ENCODE measurements at regions of chr4 and their contacts with region 1.

Region 1: GRCh38 chr4:52983563-52984303 is 121.6 kb downstream of the RASL11B start:
- DNase-seq: peak; percentile 21
- H3K4me3 ChIP-seq: no peak overlapping the region
- H3K27ac ChIP-seq: no peak overlapping the region
- H3K27me3 ChIP-seq: no peaks in the 10 kb centered on the region
- CTCF ChIP-seq: peak; percentile 69

Region 2: GRCh38 chr4:52554612-52555355 is 428.9 kb before region 1 on chr4:
- CTCF ChIA-PET with region 1: interaction called, 26 read pairs
- POLR2A ChIA-PET with region 1: no interaction called
- DNase-seq: no peak
- H3K4me3 ChIP-seq: no peak overlapping the region
- H3K27ac ChIP-seq: no peak overlapping the region
- H3K27me3 ChIP-seq: no peaks in the 10 kb centered on the region
- CTCF ChIP-seq: no peak

Region 3: GRCh38 chr4:52659001-52659721 is 324.6 kb before region 1 on chr4 and contains the start of gene USP46:
- CTCF ChIA-PET with region 1: interaction called, 11 read pairs
- POLR2A ChIA-PET with region 1: no interaction called
- DNase-seq: peak; percentile 24
- H3K4me3 ChIP-seq: peak within 1 kb of the TSS; percentile 77
- H3K27ac ChIP-seq: peak within 1 kb of the TSS; percentile 80
- H3K27me3 ChIP-seq: no peaks in the 10 kb centered on the region
- CTCF ChIP-seq: no peak
- polyA plus RNA-seq, gene USP46: 66.6 and 69.1 TPM in 2 replicates

Region 4: DNA sequence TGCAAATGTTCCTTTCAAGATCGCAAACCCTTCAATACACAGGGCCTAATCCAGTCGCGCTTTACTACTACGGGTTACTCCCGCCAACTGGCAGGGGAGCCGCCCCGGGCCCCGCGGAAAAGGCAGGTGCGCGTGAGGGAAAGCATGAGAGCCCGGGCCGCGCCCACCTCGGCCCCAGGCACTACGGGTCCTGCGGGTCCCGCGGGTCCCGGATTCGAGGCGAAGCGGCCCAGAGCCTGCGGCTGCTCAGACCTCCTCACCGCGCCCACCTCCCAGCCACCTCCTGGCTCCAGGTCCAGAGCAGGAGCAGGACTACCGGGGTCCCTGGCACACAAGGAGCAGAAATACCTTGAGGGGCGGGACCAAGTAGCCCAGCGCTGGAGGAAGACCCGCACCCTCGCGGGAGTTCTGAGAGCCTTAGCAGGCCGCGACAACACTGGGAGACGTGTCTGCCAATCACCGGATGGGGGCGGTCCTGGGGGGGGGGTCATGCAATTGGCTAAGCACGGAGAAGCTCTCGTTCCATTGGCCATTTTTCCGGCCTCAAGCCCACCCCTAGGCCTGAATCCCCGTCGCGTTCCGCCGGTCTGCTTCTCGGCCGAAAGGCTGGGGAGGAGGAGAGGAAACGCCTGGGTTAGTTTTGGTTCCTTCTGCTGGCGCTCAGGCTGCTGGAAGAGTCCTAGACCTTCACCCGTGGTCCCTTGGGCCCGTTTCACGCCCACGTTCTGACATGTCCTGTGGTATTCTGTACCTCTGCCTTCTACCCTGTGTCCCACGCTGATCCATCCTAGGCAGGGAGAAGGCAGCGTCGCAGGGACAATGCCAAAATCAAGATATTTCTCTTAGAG is 261.5 kb before region 1 on chr4:
- CTCF ChIA-PET with region 1: interaction called, 29 read pairs
- POLR2A ChIA-PET with region 1: interaction called, 5 read pairs
- DNase-seq: peak; percentile 92
- H3K4me3 ChIP-seq: peak overlapping the region; percentile 82
- H3K27ac ChIP-seq: peak overlapping the region; percentile 74
- H3K27me3 ChIP-seq: no peaks in the 10 kb centered on the region
- CTCF ChIP-seq: no peak

Region 5: GRCh38 chr4:52864793-52865192 is 118.9 kb before region 1 on chr4:
- CTCF ChIA-PET with region 1: interaction called, 17 read pairs
- POLR2A ChIA-PET with region 1: no interaction called
- DNase-seq: no peak
- H3K4me3 ChIP-seq: no peak overlapping the region
- H3K27ac ChIP-seq: no peak overlapping the region
- H3K27me3 ChIP-seq: peaks cover 19% of the 10 kb centered on the region
- CTCF ChIP-seq: no peak

Measured in AG04450 (cell line).